GM12878 (cell line): ENCODE measurements at regions of chr1 and their contacts with region 1.

Region 1: GRCh38 chr1:10128101-10128765 is 82.1 kb upstream of the KIF1B start:
- DNase-seq: no peak
- ATAC-seq: no peak
- H3K4me3 ChIP-seq: no peak overlapping the region
- H3K27ac ChIP-seq: no peak overlapping the region
- H3K4me1 ChIP-seq: no peaks in the 10 kb centered on the region; the same call in 1 of the 2 replicates
- H3K27me3 ChIP-seq: no peaks in the 10 kb centered on the region
- CTCF ChIP-seq: no peak
- EP300 ChIP-seq: no peak
- POLR2A ChIP-seq: no peak
- RAD21 ChIP-seq: no peak

Region 2: GRCh38 chr1:10082785-10083479 is 45.3 kb before region 1 on chr1:
- CTCF ChIA-PET with region 1: no interaction called
- POLR2A ChIA-PET with region 1: no interaction called
- RAD21 ChIA-PET with region 1: no interaction called
- SMC1A ChIA-PET with region 1: no interaction called
- in situ Hi-C with region 1: no loop called
- intact Hi-C with region 1: loop called (anchors 5 kb)
- DNase-seq: no peak
- ATAC-seq: no peak
- H3K4me3 ChIP-seq: no peak overlapping the region
- H3K27ac ChIP-seq: no peak overlapping the region
- H3K4me1 ChIP-seq: no peaks in the 10 kb centered on the region
- H3K27me3 ChIP-seq: no peaks in the 10 kb centered on the region
- CTCF ChIP-seq: no peak
- EP300 ChIP-seq: no peak
- POLR2A ChIP-seq: no peak
- RAD21 ChIP-seq: no peak

Region 3: GRCh38 chr1:10152709-10153284 is 24.6 kb after region 1 on chr1:
- CTCF ChIA-PET with region 1: interaction called, 10 read pairs
- POLR2A ChIA-PET with region 1: no interaction called
- RAD21 ChIA-PET with region 1: no interaction called
- SMC1A ChIA-PET with region 1: interaction called, 3 read pairs
- in situ Hi-C with region 1: no loop called
- intact Hi-C with region 1: no loop called
- DNase-seq: no peak
- ATAC-seq: peak; percentile 63
- H3K4me3 ChIP-seq: no peak overlapping the region
- H3K27ac ChIP-seq: no peak overlapping the region
- H3K4me1 ChIP-seq: no peaks in the 10 kb centered on the region
- H3K27me3 ChIP-seq: no peaks in the 10 kb centered on the region
- CTCF ChIP-seq: peak; percentile 55 to 61 (median 58)
- EP300 ChIP-seq: no peak
- POLR2A ChIP-seq: no peak
- RAD21 ChIP-seq: peak; percentile 61

Region 4: DNA sequence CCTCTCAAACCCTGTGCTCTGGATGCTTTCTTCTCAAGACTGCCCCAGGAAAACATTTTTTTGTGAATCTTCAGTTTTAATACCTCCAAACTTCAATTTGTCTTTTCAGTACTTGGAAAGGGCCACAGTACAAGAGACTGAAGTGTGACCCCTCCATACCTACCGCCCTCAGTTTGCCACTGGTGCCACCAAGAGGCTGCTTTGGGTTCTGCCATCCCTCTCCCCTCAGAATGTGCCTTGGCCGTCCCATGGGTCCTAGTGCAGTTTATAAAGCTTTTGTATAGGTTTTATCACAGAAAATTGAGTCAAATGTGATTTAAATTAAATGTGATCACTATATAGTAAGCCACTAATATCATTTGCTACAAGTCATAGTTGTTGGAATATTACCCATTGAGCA is 209.8 kb after region 1 on chr1:
- CTCF ChIA-PET with region 1: interaction called, 5 read pairs
- POLR2A ChIA-PET with region 1: no interaction called
- RAD21 ChIA-PET with region 1: no interaction called
- SMC1A ChIA-PET with region 1: interaction called, 4 read pairs
- in situ Hi-C with region 1: no loop called
- intact Hi-C with region 1: loop called (anchors 10 kb)
- DNase-seq: no peak
- ATAC-seq: peak; percentile 98
- H3K4me3 ChIP-seq: no peak overlapping the region
- H3K27ac ChIP-seq: no peak overlapping the region
- H3K4me1 ChIP-seq: no peaks in the 10 kb centered on the region
- H3K27me3 ChIP-seq: no peaks in the 10 kb centered on the region
- CTCF ChIP-seq: peak; percentile 86 to 87 (median 87)
- EP300 ChIP-seq: no peak
- POLR2A ChIP-seq: no peak
- RAD21 ChIP-seq: peak; percentile 95